ENCODE measurements at regions of chr11 and their contacts with region 1.

Region 1: GRCh38 chr11:130916238-130916855 is at the start of gene SNX19:
- DNase-seq: peak; percentile 84 to 94 (median 90)
- ATAC-seq: peak; percentile 99
- H3K4me3 ChIP-seq: peak within 1 kb of the TSS; percentile 53 to 69
- H3K4me3 Mint-ChIP-seq: peak within 1 kb of the TSS; percentile 87
- H3K27ac ChIP-seq: peak within 1 kb of the TSS; percentile 74 to 89
- H3K27ac Mint-ChIP-seq: peak within 1 kb of the TSS; percentile 91
- H3K4me1 ChIP-seq: peaks cover 15% of the 10 kb centered on the region
- H3K4me1 Mint-ChIP-seq: peaks cover 34% of the 10 kb centered on the region
- H3K27me3 ChIP-seq: no peaks in the 10 kb centered on the region
- H3K27me3 Mint-ChIP-seq: peaks cover 11% of the 10 kb centered on the region
- CTCF ChIP-seq: peak; percentile 94
- total RNA-seq, gene SNX19: 31.7 to 36.7 TPM

Region 2: GRCh38 chr11:129279326-129280026 is 1636.9 kb before region 1 on chr11:
- CTCF ChIA-PET with region 1: no interaction called
- POLR2A ChIA-PET with region 1: no interaction called
- intact Hi-C with region 1: loop called (anchors 5 to 10 kb)
- DNase-seq: peak; percentile 48 to 88 (median 75)
- ATAC-seq: peak; percentile 78
- H3K4me3 ChIP-seq: peak overlapping the region; percentile 62 to 64
- H3K4me3 Mint-ChIP-seq: peak overlapping the region; percentile 72
- H3K27ac ChIP-seq: peak overlapping the region in 1 of 2 experiments; percentile 46
- H3K27ac Mint-ChIP-seq: peak overlapping the region; percentile 49
- H3K4me1 ChIP-seq: peaks cover 14% of the 10 kb centered on the region
- H3K4me1 Mint-ChIP-seq: peaks cover 29% of the 10 kb centered on the region
- H3K27me3 ChIP-seq: peaks cover 0 to 5% of the 10 kb centered on the region in 2 experiments
- H3K27me3 Mint-ChIP-seq: peaks cover 15% of the 10 kb centered on the region
- CTCF ChIP-seq: no peak

Region 3: DNA sequence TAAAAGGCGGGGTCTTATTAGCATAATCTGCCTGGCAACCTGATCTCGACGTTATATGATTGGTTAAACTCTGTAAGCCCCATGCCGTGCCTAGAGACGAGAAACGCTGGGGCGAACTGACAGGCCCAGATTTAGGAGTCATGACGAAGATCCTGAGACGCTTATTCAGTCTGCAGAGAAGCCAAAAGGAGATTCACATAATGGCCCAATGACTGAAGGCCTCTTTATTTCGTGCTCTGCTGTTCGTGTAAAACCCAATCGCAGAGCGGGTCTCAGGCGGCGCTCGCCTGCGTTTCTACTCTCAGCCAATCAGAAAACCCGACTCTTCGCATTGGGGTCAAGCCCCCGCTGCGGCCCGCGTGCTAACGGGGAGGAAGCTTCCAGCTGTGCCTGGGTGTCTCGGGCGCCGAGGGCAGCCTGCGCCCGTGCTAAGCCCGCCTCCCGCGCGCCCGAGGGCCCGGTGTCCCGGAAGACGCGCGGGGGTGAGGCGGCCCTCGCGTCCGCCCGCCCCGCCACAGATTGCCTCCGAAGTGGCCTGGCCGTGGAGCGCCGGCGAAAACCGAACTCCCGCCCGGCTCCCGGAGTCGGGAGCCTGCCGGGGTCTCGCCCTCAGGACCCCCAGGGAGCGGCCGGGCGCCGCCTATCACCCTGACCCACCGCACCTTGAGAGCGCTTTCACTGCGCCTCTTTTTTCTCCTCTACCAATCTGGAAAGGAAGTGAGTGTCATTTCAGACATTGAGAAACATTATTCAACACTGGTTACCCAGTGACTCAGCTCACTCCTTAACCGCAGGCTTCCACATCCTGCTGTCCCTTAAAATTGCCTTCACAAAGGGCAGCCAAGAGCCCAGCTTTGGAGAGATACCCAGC is 913.3 kb before region 1 on chr11:
- CTCF ChIA-PET with region 1: interaction called, 4 read pairs
- POLR2A ChIA-PET with region 1: no interaction called
- intact Hi-C with region 1: loop called (anchors 1 to 2 kb)
- DNase-seq: peak; percentile 82 to 96 (median 89)
- ATAC-seq: peak; percentile 77
- H3K4me3 ChIP-seq: peak overlapping the region; percentile 69 to 71
- H3K4me3 Mint-ChIP-seq: peak overlapping the region; percentile 99
- H3K27ac ChIP-seq: peak overlapping the region; percentile 99 to 100
- H3K27ac Mint-ChIP-seq: peak overlapping the region; percentile 100
- H3K4me1 ChIP-seq: peaks cover 24% of the 10 kb centered on the region
- H3K4me1 Mint-ChIP-seq: peaks cover 37% of the 10 kb centered on the region
- H3K27me3 ChIP-seq: no peaks in the 10 kb centered on the region
- H3K27me3 Mint-ChIP-seq: no peaks in the 10 kb centered on the region
- CTCF ChIP-seq: no peak

Region 4: GRCh38 chr11:130069684-130070108 is 846.7 kb before region 1 on chr11 and contains the start of gene APLP2:
- CTCF ChIA-PET with region 1: no interaction called
- POLR2A ChIA-PET with region 1: no interaction called
- intact Hi-C with region 1: loop called (anchors 2 to 5 kb)
- DNase-seq: peak; percentile 94 to 99 (median 97)
- ATAC-seq: peak; percentile 93
- H3K4me3 ChIP-seq: peak within 1 kb of the TSS; percentile 77 to 88
- H3K4me3 Mint-ChIP-seq: peak within 1 kb of the TSS; percentile 97
- H3K27ac ChIP-seq: peak within 1 kb of the TSS; percentile 74 to 80
- H3K27ac Mint-ChIP-seq: peak within 1 kb of the TSS; percentile 95
- H3K4me1 ChIP-seq: peaks cover 17% of the 10 kb centered on the region
- H3K4me1 Mint-ChIP-seq: peaks cover 18% of the 10 kb centered on the region
- H3K27me3 ChIP-seq: no peaks in the 10 kb centered on the region
- H3K27me3 Mint-ChIP-seq: peaks cover 4% of the 10 kb centered on the region
- CTCF ChIP-seq: no peak
- total RNA-seq, gene APLP2: 23.2 to 24.7 TPM

Region 5: DNA sequence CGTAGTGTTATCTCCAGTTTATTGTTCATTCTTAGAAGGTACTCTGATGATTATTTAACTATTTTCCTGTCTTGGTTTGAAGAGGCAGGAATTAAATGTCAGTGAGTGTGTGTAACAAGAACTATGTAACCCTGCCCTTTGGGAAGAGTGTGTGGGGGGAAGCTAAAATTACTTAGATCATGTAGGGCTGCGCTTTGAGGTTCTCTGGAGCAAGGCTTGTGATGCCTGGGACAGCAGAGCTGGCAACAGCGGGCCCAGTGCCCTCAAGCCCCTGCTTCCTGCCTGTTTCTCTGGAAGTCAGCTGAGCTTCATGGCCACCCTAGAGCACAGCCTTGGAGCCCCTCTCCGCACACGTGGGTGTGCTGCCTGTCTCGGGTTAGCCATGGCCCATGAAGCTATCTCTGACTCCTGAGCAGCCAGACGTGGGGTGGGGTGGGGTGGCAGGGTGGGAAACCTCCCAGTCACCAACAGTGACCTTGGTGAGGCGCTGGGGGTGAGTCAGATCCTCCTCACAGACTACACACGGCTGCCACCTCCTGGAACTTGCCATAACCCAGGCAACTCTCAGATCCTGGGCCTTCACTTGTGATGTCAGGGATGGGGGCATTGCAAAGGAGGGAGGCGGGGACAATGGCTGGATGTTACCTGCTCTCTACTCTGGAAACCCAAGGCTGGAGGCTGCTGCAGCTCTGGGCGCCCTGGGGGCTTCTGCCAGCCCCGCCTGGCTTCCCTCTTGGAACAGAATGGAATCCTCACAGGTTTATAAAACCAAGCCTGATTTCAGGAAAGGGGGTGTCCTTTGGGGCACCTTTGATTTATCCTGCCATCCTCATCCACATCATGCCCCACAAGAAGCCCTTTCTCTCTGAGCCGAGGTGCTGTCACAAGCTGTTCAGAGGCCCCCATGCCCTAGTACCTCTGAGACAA is 88.6 kb before region 1 on chr11:
- CTCF ChIA-PET with region 1: no interaction called
- POLR2A ChIA-PET with region 1: no interaction called
- intact Hi-C with region 1: no loop called
- DNase-seq: peak in 2 of 9 experiments; percentile 6 to 23
- ATAC-seq: no peak
- H3K4me3 ChIP-seq: no peak overlapping the region
- H3K4me3 Mint-ChIP-seq: no peak overlapping the region
- H3K27ac ChIP-seq: no peak overlapping the region
- H3K27ac Mint-ChIP-seq: no peak overlapping the region
- H3K4me1 ChIP-seq: no peaks in the 10 kb centered on the region
- H3K4me1 Mint-ChIP-seq: no peaks in the 10 kb centered on the region
- H3K27me3 ChIP-seq: no peaks in the 10 kb centered on the region
- H3K27me3 Mint-ChIP-seq: peaks cover 14% of the 10 kb centered on the region
- CTCF ChIP-seq: no peak

Region 6: GRCh38 chr11:130894322-130895025 is 21.9 kb before region 1 on chr11:
- CTCF ChIA-PET with region 1: interaction called, 10 read pairs
- POLR2A ChIA-PET with region 1: interaction called, 3 read pairs
- intact Hi-C with region 1: no loop called
- DNase-seq: peak; percentile 36 to 76 (median 62)
- ATAC-seq: peak; percentile 87
- H3K4me3 ChIP-seq: no peak overlapping the region
- H3K4me3 Mint-ChIP-seq: no peak overlapping the region
- H3K27ac ChIP-seq: no peak overlapping the region
- H3K27ac Mint-ChIP-seq: no peak overlapping the region
- H3K4me1 ChIP-seq: no peaks in the 10 kb centered on the region
- H3K4me1 Mint-ChIP-seq: peaks cover 4% of the 10 kb centered on the region
- H3K27me3 ChIP-seq: no peaks in the 10 kb centered on the region
- H3K27me3 Mint-ChIP-seq: no peaks in the 10 kb centered on the region
- CTCF ChIP-seq: peak; percentile 94

Region 7: DNA sequence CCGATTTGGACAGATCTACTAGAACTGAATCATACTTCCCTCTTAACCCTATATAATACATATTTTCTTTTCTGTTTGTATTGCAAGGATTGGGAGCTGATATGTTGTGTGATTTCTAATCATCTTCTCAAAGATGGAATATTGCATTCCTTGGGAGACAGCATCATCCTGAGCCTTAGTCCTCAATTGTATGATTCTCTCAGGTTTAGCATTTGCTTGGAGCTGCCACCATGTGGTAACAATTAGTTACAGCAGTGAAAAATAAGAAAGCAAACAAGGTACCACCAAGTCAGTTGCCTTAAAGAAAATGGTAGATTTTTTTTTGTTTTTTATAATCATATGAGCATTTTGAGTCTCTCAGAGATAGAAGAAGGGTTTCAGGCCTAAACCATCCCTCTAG is 12.0 kb before region 1 on chr11:
- CTCF ChIA-PET with region 1: interaction called, 10 read pairs
- POLR2A ChIA-PET with region 1: interaction called, 4 read pairs
- intact Hi-C with region 1: no loop called
- DNase-seq: no peak
- ATAC-seq: no peak
- H3K4me3 ChIP-seq: no peak overlapping the region
- H3K4me3 Mint-ChIP-seq: no peak overlapping the region
- H3K27ac ChIP-seq: no peak overlapping the region
- H3K27ac Mint-ChIP-seq: no peak overlapping the region
- H3K4me1 ChIP-seq: no peaks in the 10 kb centered on the region
- H3K4me1 Mint-ChIP-seq: peaks cover 12% of the 10 kb centered on the region
- H3K27me3 ChIP-seq: no peaks in the 10 kb centered on the region
- H3K27me3 Mint-ChIP-seq: no peaks in the 10 kb centered on the region
- CTCF ChIP-seq: no peak

Measured in CD8-positive, alpha-beta T cell (primary cell).